CD4-positive, alpha-beta T cell (primary cell): ENCODE measurements at regions of chr5 and their contacts with region 1.

Region 1: DNA sequence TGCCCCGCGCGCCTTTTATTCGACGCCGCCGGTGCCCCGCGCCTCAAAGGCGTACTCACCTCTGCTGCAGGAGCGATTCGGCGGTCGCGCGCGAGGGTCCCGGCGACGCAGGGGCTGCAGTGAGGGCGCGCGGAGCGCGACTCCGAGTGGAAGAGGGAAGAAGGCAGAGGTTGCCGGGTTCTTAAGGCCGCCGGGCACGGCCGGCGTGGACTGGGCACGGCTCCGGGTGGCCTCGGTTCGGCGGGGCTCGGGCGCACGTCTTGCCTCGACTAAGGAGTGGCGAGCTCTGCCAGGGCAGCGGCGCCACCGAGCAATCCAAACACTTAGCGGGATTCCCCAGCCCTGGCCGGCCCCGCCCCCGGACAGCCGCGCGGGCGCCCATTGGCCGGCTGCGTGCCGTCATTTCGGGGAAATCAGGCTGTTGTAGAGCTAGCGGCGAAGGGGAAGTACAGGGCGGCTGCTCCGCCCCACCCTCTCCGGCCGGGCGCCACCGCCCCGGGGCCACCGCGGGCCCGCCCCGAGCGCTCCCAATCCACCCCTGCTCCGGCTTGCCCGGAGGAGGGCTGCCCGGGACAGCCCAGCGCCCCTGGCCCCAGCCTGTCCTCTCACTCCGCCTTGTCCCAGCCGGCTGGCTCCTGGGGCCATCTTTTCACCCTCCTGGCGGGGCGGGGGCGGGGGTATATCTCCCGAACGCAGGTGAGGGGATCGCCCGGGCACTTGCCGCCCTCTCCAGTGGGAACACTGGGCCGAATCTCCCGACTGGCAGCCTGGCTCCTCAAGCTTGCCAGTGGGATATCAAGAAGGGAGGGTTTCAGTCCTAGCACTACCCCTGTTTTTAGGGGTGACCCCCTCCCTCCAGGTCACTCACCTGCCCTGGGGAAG is at the start of gene IRF1:
- DNase-seq: peak; percentile 94 to 99 (median 98)
- ATAC-seq: peak; percentile 71
- H3K4me3 ChIP-seq: peak within 1 kb of the TSS; percentile 98
- H3K4me3 Mint-ChIP-seq: peak within 1 kb of the TSS; percentile 98
- H3K27ac ChIP-seq: peak within 1 kb of the TSS; percentile 98 to 99
- H3K27ac Mint-ChIP-seq: peak within 1 kb of the TSS; percentile 97
- H3K4me1 ChIP-seq: peaks cover 75% of the 10 kb centered on the region
- H3K4me1 Mint-ChIP-seq: peaks cover 83% of the 10 kb centered on the region
- H3K27me3 ChIP-seq: no peaks in the 10 kb centered on the region
- H3K27me3 Mint-ChIP-seq: peaks cover 7% of the 10 kb centered on the region
- CTCF ChIP-seq: no peak
- total RNA-seq, gene IRF1: 1,212 to 1,234 TPM

Region 2: DNA sequence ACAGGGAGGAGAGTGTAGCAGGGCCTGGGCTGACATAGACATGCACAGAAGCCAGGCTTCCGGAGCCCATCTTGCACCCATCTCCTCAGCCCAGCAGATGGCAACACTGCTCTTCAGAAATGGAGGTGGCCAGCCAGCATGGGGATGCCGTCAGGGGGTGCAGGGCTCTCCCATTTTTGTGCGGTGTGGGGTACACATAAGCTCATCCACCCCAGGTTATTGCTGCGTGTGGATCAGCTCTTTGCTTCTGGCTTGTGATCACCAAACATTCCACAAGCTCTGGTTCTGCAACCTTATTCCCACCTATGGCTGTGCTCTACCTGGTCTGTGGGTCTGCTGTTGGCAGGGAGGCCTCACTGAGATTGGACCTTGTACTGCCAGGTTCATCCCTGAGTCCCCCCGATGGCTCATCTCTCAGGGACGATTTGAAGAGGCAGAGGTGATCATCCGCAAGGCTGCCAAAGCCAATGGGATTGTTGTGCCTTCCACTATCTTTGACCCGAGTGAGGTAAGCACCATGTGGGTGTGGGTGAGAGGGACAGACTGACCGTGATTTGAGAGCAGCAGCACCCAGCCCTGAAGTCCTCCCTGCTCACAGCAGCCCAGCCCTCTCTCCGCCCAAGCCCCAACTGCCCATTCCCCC is 104.0 kb before region 1 on chr5:
- CTCF ChIA-PET with region 1: interaction called, 104 read pairs
- POLR2A ChIA-PET with region 1: interaction called, 94 read pairs
- intact Hi-C with region 1: no loop called
- DNase-seq: peak; percentile 66 to 90 (median 75)
- ATAC-seq: peak; percentile 92
- H3K4me3 ChIP-seq: no peak overlapping the region
- H3K4me3 Mint-ChIP-seq: no peak overlapping the region
- H3K27ac ChIP-seq: no peak overlapping the region
- H3K27ac Mint-ChIP-seq: peak overlapping the region; percentile 60
- H3K4me1 ChIP-seq: peaks cover 30% of the 10 kb centered on the region
- H3K4me1 Mint-ChIP-seq: peaks cover 31% of the 10 kb centered on the region
- H3K27me3 ChIP-seq: no peaks in the 10 kb centered on the region
- H3K27me3 Mint-ChIP-seq: no peaks in the 10 kb centered on the region
- CTCF ChIP-seq: peak; percentile 76

Region 3: GRCh38 chr5:132419502-132420468 is 70.9 kb before region 1 on chr5:
- CTCF ChIA-PET with region 1: interaction called, 8 read pairs
- POLR2A ChIA-PET with region 1: interaction called, 645 read pairs
- intact Hi-C with region 1: loop called (anchors 2 kb)
- DNase-seq: peak; percentile 27 to 84 (median 54)
- ATAC-seq: peak; percentile 76
- H3K4me3 ChIP-seq: peak overlapping the region; percentile 37
- H3K4me3 Mint-ChIP-seq: peak overlapping the region; percentile 85
- H3K27ac ChIP-seq: peak overlapping the region; percentile 81 to 88
- H3K27ac Mint-ChIP-seq: peak overlapping the region; percentile 92
- H3K4me1 ChIP-seq: peaks cover 91% of the 10 kb centered on the region
- H3K4me1 Mint-ChIP-seq: peaks cover 94% of the 10 kb centered on the region
- H3K27me3 ChIP-seq: no peaks in the 10 kb centered on the region
- H3K27me3 Mint-ChIP-seq: no peaks in the 10 kb centered on the region
- CTCF ChIP-seq: peak; percentile 85

Region 4: GRCh38 chr5:132456296-132457001 is 34.3 kb before region 1 on chr5:
- CTCF ChIA-PET with region 1: interaction called, 34 read pairs
- POLR2A ChIA-PET with region 1: interaction called, 1,045 read pairs
- intact Hi-C with region 1: loop called in 1 of 2 experiments (anchors 5 kb)
- DNase-seq: peak; percentile 56 to 91 (median 67)
- ATAC-seq: peak; percentile 73
- H3K4me3 ChIP-seq: peak overlapping the region; percentile 17
- H3K4me3 Mint-ChIP-seq: peak overlapping the region; percentile 57
- H3K27ac ChIP-seq: peak overlapping the region; percentile 88 to 89
- H3K27ac Mint-ChIP-seq: peak overlapping the region; percentile 97
- H3K4me1 ChIP-seq: peaks cover 87% of the 10 kb centered on the region
- H3K4me1 Mint-ChIP-seq: peaks cover 93% of the 10 kb centered on the region
- H3K27me3 ChIP-seq: no peaks in the 10 kb centered on the region
- H3K27me3 Mint-ChIP-seq: no peaks in the 10 kb centered on the region
- CTCF ChIP-seq: no peak

Region 5: GRCh38 chr5:132479111-132479951 is 11.4 kb before region 1 on chr5:
- CTCF ChIA-PET with region 1: interaction called, 17 read pairs
- POLR2A ChIA-PET with region 1: interaction called, 526 read pairs
- intact Hi-C with region 1: no loop called
- DNase-seq: peak in 2 of 14 experiments; percentile 2 to 40
- ATAC-seq: no peak
- H3K4me3 ChIP-seq: no peak overlapping the region
- H3K4me3 Mint-ChIP-seq: peak overlapping the region; percentile 67
- H3K27ac ChIP-seq: peak overlapping the region; percentile 1 to 60
- H3K27ac Mint-ChIP-seq: peak overlapping the region; percentile 97
- H3K4me1 ChIP-seq: peaks cover 89% of the 10 kb centered on the region
- H3K4me1 Mint-ChIP-seq: peaks cover 86% of the 10 kb centered on the region
- H3K27me3 ChIP-seq: no peaks in the 10 kb centered on the region
- H3K27me3 Mint-ChIP-seq: peaks cover 24% of the 10 kb centered on the region
- CTCF ChIP-seq: no peak

Region 6: GRCh38 chr5:132729896-132730295 is 239.2 kb after region 1 on chr5:
- CTCF ChIA-PET with region 1: no interaction called
- POLR2A ChIA-PET with region 1: no interaction called
- intact Hi-C with region 1: no loop called
- DNase-seq: no peak
- ATAC-seq: no peak
- H3K4me3 ChIP-seq: no peak overlapping the region
- H3K4me3 Mint-ChIP-seq: no peak overlapping the region
- H3K27ac ChIP-seq: no peak overlapping the region
- H3K27ac Mint-ChIP-seq: no peak overlapping the region
- H3K4me1 ChIP-seq: no peaks in the 10 kb centered on the region
- H3K4me1 Mint-ChIP-seq: no peaks in the 10 kb centered on the region
- H3K27me3 ChIP-seq: no peaks in the 10 kb centered on the region
- H3K27me3 Mint-ChIP-seq: no peaks in the 10 kb centered on the region
- CTCF ChIP-seq: no peak

Region 7: GRCh38 chr5:133051580-133052332 is 561.0 kb after region 1 on chr5 and contains the start of gene HSPA4:
- CTCF ChIA-PET with region 1: no interaction called
- POLR2A ChIA-PET with region 1: interaction called, 8 read pairs
- intact Hi-C with region 1: loop called in 1 of 2 experiments (anchors 2 kb)
- DNase-seq: peak; percentile 93 to 100 (median 95)
- ATAC-seq: peak; percentile 88
- H3K4me3 ChIP-seq: peak within 1 kb of the TSS; percentile 98
- H3K4me3 Mint-ChIP-seq: peak within 1 kb of the TSS; percentile 100
- H3K27ac ChIP-seq: peak within 1 kb of the TSS; percentile 95 to 99
- H3K27ac Mint-ChIP-seq: peak within 1 kb of the TSS; percentile 100
- H3K4me1 ChIP-seq: peaks cover 40% of the 10 kb centered on the region
- H3K4me1 Mint-ChIP-seq: peaks cover 64% of the 10 kb centered on the region
- H3K27me3 ChIP-seq: no peaks in the 10 kb centered on the region
- H3K27me3 Mint-ChIP-seq: no peaks in the 10 kb centered on the region
- CTCF ChIP-seq: no peak
- total RNA-seq, gene HSPA4: 42.2 to 44.7 TPM